ENCODE measurements at regions of chr13 and their contacts with region 1.

Region 1: DNA sequence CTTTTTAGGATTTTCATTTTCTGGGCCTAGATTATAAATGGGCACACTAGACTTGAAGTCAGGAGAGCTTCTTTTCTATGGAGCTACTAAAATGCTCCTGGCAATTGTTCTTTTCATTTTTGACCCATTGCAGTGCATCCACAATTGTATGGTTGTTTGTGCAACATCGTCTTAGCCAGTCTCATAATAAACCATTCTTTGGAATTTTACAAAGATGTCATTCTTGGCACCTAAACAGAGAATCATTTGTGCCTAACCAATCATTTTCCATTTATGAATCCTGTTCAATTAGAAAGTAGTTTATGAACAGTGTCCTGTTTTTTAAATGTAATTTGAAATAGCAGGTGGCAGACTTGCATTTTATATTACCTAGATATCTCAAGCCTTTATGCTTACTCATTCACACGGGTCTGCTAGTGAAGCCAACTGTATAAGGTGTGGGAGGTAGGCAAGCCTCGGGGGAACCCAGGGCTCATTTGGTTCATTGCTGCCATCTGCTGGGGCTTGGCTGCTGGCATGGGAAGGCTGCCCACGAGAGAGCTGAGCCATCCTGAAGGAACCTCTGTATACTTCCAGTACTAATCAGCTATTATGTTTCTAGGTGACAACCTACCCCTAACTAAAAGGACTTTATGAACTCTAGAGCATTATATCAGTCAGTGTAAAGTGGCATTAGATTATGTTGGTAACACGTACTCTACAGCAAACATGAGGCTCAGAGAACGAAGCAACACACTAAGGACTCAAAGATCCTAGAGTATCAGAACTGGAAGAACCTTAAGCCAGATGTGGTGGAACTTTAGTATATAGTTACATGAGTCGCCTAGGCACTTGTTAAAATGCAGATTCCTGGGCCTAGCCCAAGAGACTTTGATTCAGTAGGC is 60.0 kb downstream of the TPT1 start:
- DNase-seq: peak; percentile 65
- ATAC-seq: peak; percentile 90 to 95
- H3K4me3 ChIP-seq: no peak overlapping the region
- H3K27ac ChIP-seq: no peak overlapping the region
- H3K4me1 ChIP-seq: no peaks in the 10 kb centered on the region
- H3K27me3 ChIP-seq: no peaks in the 10 kb centered on the region
- CTCF ChIP-seq: peak; percentile 67

Region 2: DNA sequence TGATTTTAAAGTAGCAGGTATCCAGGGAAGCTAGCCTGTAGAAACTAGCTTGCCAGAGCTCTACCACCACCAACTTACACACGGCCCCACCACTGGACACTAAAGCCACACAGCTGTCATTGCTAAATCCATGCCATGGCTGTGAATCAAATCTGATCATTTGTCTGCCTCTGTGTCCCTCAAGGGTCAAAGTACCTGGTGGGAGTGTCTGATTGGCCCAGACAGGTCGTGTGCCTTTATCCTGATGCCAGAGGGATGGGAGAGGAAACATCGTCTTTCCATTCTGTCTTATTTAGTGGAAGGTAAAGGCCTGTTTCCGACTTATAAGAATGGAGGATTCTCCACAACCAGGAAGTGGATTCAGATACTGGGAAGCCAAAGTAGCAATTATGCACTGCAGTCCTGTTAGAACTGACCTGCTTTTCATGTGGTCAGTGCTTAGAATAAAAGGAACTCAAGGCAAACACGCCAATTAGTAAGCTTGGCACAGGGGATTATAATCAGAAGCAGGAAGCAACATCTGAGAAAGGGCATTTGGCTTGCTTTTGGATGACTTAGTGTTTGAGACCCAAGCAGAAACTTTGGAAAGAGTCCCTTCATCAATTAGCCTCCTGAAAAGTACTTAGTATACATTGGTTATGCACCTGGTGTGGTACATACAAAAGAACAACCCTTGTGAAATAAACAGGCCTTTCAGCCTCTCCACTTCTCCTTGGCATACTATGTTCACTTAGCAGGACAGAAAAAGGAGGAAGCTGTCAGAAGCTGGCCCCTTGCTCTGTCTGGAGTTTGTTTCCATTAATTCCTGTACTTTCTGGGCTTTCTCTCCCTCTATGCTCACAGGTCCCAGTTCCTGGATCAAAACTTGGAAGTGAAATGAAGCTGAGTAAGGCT is 484.1 kb before region 1 on chr13:
- intact Hi-C with region 1: no loop called
- DNase-seq: no peak
- ATAC-seq: peak in 1 of 2 donors; percentile 37
- H3K4me3 ChIP-seq: no peak overlapping the region
- H3K27ac ChIP-seq: peak overlapping the region; percentile 16
- H3K4me1 ChIP-seq: peaks cover 4% of the 10 kb centered on the region
- H3K27me3 ChIP-seq: no peaks in the 10 kb centered on the region
- CTCF ChIP-seq: no peak

Region 3: GRCh38 chr13:45004096-45004495 is 276.9 kb before region 1 on chr13:
- intact Hi-C with region 1: no loop called
- DNase-seq: no peak
- ATAC-seq: no peak
- H3K4me3 ChIP-seq: no peak overlapping the region
- H3K27ac ChIP-seq: no peak overlapping the region
- H3K4me1 ChIP-seq: no peaks in the 10 kb centered on the region
- H3K27me3 ChIP-seq: no peaks in the 10 kb centered on the region
- CTCF ChIP-seq: no peak

Region 4: DNA sequence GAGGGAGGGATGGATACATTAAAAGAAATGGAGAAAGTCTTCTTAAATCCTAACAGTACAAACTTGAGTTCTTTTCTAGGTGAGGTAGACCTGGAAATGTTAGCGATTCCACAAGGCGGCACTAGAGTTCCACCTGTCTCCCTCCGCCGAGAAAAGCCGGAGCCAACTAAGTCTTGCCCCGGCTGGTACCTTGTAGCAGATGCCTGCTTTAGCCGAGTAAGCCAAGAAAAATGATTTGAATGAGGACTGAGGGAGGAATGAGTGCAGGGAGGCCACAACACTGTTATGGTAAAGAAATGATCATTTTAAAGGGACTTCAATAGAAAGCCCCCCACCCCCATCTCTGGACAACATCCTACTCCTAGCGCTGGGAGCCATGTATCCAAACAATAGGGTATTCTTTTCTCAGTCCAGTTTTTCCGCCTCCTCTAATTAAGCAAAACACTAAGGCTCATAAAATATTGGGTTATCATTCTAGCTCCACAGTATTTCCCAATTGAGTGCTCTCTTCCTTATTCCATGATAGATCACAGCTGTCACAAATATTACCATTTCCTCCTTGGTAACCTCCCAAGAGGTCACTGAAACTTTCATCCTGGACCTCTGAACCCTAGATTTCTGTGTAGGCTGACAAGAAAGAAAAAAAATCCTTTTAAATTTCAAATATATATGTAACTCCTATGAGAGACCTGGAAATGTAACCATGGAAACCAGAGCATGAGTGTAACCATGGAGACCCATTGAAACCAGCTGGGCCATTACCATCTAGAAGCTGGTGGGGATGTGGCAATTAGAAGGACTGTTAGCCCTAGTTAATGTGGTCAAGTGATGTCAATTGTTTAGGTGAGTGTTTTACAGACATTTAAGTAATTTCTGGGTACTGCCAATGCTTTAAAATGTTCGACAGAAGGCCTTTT is 233.3 kb before region 1 on chr13:
- intact Hi-C with region 1: loop called (anchors 10 kb)
- DNase-seq: peak; percentile 69
- ATAC-seq: peak; percentile 92 to 95
- H3K4me3 ChIP-seq: peak overlapping the region; percentile 53
- H3K27ac ChIP-seq: no peak overlapping the region
- H3K4me1 ChIP-seq: peaks cover 10% of the 10 kb centered on the region
- H3K27me3 ChIP-seq: no peaks in the 10 kb centered on the region
- CTCF ChIP-seq: peak; percentile 84

Region 5: GRCh38 chr13:45385907-45386553 is 105.0 kb after region 1 on chr13:
- intact Hi-C with region 1: no loop called
- DNase-seq: no peak
- ATAC-seq: no peak
- H3K4me3 ChIP-seq: no peak overlapping the region
- H3K27ac ChIP-seq: no peak overlapping the region
- H3K4me1 ChIP-seq: no peaks in the 10 kb centered on the region
- H3K27me3 ChIP-seq: no peaks in the 10 kb centered on the region
- CTCF ChIP-seq: no peak

Measured in lower lobe of right lung (tissue), 2 donors.